Naive thymus-derived CD4-positive, alpha-beta T cell (primary cell): ENCODE measurements at regions of chr6 and their contacts with region 1.

Region 1: DNA sequence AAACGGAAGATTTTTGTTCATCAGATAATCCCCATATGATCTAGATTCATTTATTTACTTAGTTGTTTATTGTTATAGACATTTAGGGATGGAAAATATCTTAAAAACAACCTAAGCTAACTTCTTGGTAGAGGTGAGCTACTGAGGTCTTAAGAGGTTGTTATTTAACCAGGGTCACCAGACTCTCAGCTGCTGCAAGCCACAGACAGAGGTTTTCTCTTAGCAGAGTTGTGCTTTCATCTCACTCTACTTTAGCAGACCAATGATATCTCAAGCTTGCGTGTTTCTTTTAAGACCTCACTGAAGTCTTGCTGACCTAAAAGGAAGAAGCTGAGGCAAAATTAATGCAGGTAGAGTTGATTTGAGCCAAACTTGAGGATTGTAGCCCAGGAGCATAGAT is 43.6 kb downstream of the NCOA7 start:
- DNase-seq: peak in 1 of 9 donors; percentile 13
- ATAC-seq: peak; percentile 55
- H3K4me3 ChIP-seq: no peak overlapping the region
- H3K4me3 Mint-ChIP-seq: peak overlapping the region in 6 of 10 donors; percentile 16 to 73 (median 40)
- H3K27ac ChIP-seq: no peak overlapping the region
- H3K27ac Mint-ChIP-seq: peak overlapping the region in 7 of 9 donors; percentile 22 to 78 (median 48)
- H3K4me1 ChIP-seq: peaks cover 12 to 38% of the 10 kb centered on the region in 2 donors
- H3K4me1 Mint-ChIP-seq: peaks cover 39 to 64% (median 45%) of the 10 kb centered on the region in 7 donors
- H3K27me3 ChIP-seq: no peaks in the 10 kb centered on the region
- H3K27me3 Mint-ChIP-seq: no peaks in the 10 kb centered on the region

Region 2: GRCh38 chr6:125779924-125780539 is 54.3 kb before region 1 on chr6:
- CTCF ChIA-PET with region 1: no interaction called
- POLR2A ChIA-PET with region 1: interaction called, 21 read pairs
- intact Hi-C with region 1: loop called in 1 of 2 experiments (anchors 1 kb)
- DNase-seq: peak; percentile 83 to 96 (median 94)
- ATAC-seq: peak; percentile 89
- H3K4me3 ChIP-seq: peak overlapping the region; percentile 84
- H3K4me3 Mint-ChIP-seq: no peak overlapping the region
- H3K27ac ChIP-seq: peak overlapping the region; percentile 77
- H3K27ac Mint-ChIP-seq: no peak overlapping the region
- H3K4me1 ChIP-seq: peaks cover 4 to 19% of the 10 kb centered on the region in 2 donors
- H3K4me1 Mint-ChIP-seq: peaks cover 5 to 27% (median 22%) of the 10 kb centered on the region in 7 donors
- H3K27me3 ChIP-seq: no peaks in the 10 kb centered on the region
- H3K27me3 Mint-ChIP-seq: peaks cover 0 to 28% (median 0%) of the 10 kb centered on the region in 5 donors

Region 3: GRCh38 chr6:125814481-125814880 is 19.9 kb before region 1 on chr6:
- CTCF ChIA-PET with region 1: no interaction called
- POLR2A ChIA-PET with region 1: no interaction called
- intact Hi-C with region 1: loop called (anchors 1 to 2 kb)
- DNase-seq: no peak
- ATAC-seq: no peak
- H3K4me3 ChIP-seq: no peak overlapping the region
- H3K4me3 Mint-ChIP-seq: peak overlapping the region in 9 of 10 donors; percentile 6 to 69 (median 53)
- H3K27ac ChIP-seq: no peak overlapping the region
- H3K27ac Mint-ChIP-seq: peak overlapping the region in 5 of 9 donors; percentile 22 to 90 (median 82)
- H3K4me1 ChIP-seq: peaks cover 0 to 5% of the 10 kb centered on the region in 2 donors
- H3K4me1 Mint-ChIP-seq: peaks cover 21 to 67% (median 45%) of the 10 kb centered on the region in 7 donors
- H3K27me3 ChIP-seq: no peaks in the 10 kb centered on the region
- H3K27me3 Mint-ChIP-seq: no peaks in the 10 kb centered on the region

Region 4: GRCh38 chr6:125821825-125822281 is 12.5 kb before region 1 on chr6:
- CTCF ChIA-PET with region 1: no interaction called
- POLR2A ChIA-PET with region 1: interaction called, 4 read pairs
- intact Hi-C with region 1: loop called in 1 of 2 experiments (anchors 1 kb)
- DNase-seq: no peak
- ATAC-seq: no peak
- H3K4me3 ChIP-seq: no peak overlapping the region
- H3K4me3 Mint-ChIP-seq: no peak overlapping the region
- H3K27ac ChIP-seq: no peak overlapping the region
- H3K27ac Mint-ChIP-seq: no peak overlapping the region
- H3K4me1 ChIP-seq: peaks cover 0 to 8% of the 10 kb centered on the region in 2 donors
- H3K4me1 Mint-ChIP-seq: peaks cover 13 to 40% (median 21%) of the 10 kb centered on the region in 7 donors
- H3K27me3 ChIP-seq: no peaks in the 10 kb centered on the region
- H3K27me3 Mint-ChIP-seq: no peaks in the 10 kb centered on the region

Region 5: DNA sequence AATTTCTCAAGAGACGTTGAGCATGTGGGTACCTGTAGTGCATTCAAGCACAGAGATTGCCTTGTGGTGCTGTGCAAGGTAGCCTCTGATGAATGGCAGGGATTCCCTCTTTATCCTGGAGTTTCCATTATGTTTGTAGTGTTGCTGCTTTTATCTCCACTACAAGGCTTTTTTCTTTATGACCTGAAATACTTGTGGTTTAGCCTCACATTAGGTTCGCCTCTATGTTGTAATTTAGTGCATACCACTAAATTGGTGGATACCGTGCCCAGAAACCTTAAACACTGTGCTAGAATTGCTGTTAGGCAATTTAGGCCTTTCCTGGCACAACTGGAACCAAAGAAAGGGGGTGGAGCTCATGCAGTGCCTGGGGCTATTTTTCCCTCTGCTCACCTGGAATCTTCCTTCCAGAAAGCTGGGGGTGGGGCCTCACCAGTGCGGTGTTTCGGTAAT is 33.2 kb after region 1 on chr6:
- CTCF ChIA-PET with region 1: no interaction called
- POLR2A ChIA-PET with region 1: no interaction called
- intact Hi-C with region 1: loop called in 1 of 2 experiments (anchors 5 kb)
- DNase-seq: no peak
- ATAC-seq: no peak
- H3K4me3 ChIP-seq: no peak overlapping the region
- H3K4me3 Mint-ChIP-seq: no peak overlapping the region
- H3K27ac ChIP-seq: no peak overlapping the region
- H3K27ac Mint-ChIP-seq: no peak overlapping the region
- H3K4me1 ChIP-seq: no peaks in the 10 kb centered on the region
- H3K4me1 Mint-ChIP-seq: peaks cover 0 to 9% (median 0%) of the 10 kb centered on the region in 7 donors
- H3K27me3 ChIP-seq: no peaks in the 10 kb centered on the region
- H3K27me3 Mint-ChIP-seq: no peaks in the 10 kb centered on the region

Region 6: GRCh38 chr6:125906158-125906998 is 72.0 kb after region 1 on chr6:
- CTCF ChIA-PET with region 1: interaction called, 4 read pairs
- POLR2A ChIA-PET with region 1: no interaction called
- intact Hi-C with region 1: loop called in 1 of 2 experiments (anchors 5 kb)
- DNase-seq: peak in 7 of 9 donors; percentile 18 to 49 (median 29)
- ATAC-seq: peak; percentile 82
- H3K4me3 ChIP-seq: no peak overlapping the region
- H3K4me3 Mint-ChIP-seq: no peak overlapping the region
- H3K27ac ChIP-seq: no peak overlapping the region
- H3K27ac Mint-ChIP-seq: peak overlapping the region in 3 of 9 donors; percentile 17 to 60 (median 21)
- H3K4me1 ChIP-seq: no peaks in the 10 kb centered on the region
- H3K4me1 Mint-ChIP-seq: peaks cover 0 to 48% (median 0%) of the 10 kb centered on the region in 7 donors
- H3K27me3 ChIP-seq: no peaks in the 10 kb centered on the region
- H3K27me3 Mint-ChIP-seq: no peaks in the 10 kb centered on the region

Region 7: GRCh38 chr6:126086560-126086959 is 252.2 kb after region 1 on chr6:
- CTCF ChIA-PET with region 1: no interaction called
- POLR2A ChIA-PET with region 1: no interaction called
- intact Hi-C with region 1: no loop called
- DNase-seq: no peak
- ATAC-seq: no peak
- H3K4me3 ChIP-seq: no peak overlapping the region
- H3K4me3 Mint-ChIP-seq: no peak overlapping the region
- H3K27ac ChIP-seq: no peak overlapping the region
- H3K27ac Mint-ChIP-seq: no peak overlapping the region
- H3K4me1 ChIP-seq: no peaks in the 10 kb centered on the region
- H3K4me1 Mint-ChIP-seq: peaks cover 0 to 7% (median 5%) of the 10 kb centered on the region in 7 donors
- H3K27me3 ChIP-seq: no peaks in the 10 kb centered on the region
- H3K27me3 Mint-ChIP-seq: no peaks in the 10 kb centered on the region